ENCODE measurements at regions of chr2 and their contacts with region 1.

Region 1: GRCh38 chr2:7203055-7203467 is 285.8 kb downstream of the RNF144A start:
- DNase-seq: peak; percentile 15
- ATAC-seq: peak; percentile 53; the same call in 1 of the 2 replicates
- H3K4me3 ChIP-seq: no peak overlapping the region
- H3K27ac ChIP-seq: no peak overlapping the region
- H3K4me1 ChIP-seq: no peaks in the 10 kb centered on the region
- H3K27me3 ChIP-seq: no peaks in the 10 kb centered on the region
- CTCF ChIP-seq: peak; percentile 93

Region 2: DNA sequence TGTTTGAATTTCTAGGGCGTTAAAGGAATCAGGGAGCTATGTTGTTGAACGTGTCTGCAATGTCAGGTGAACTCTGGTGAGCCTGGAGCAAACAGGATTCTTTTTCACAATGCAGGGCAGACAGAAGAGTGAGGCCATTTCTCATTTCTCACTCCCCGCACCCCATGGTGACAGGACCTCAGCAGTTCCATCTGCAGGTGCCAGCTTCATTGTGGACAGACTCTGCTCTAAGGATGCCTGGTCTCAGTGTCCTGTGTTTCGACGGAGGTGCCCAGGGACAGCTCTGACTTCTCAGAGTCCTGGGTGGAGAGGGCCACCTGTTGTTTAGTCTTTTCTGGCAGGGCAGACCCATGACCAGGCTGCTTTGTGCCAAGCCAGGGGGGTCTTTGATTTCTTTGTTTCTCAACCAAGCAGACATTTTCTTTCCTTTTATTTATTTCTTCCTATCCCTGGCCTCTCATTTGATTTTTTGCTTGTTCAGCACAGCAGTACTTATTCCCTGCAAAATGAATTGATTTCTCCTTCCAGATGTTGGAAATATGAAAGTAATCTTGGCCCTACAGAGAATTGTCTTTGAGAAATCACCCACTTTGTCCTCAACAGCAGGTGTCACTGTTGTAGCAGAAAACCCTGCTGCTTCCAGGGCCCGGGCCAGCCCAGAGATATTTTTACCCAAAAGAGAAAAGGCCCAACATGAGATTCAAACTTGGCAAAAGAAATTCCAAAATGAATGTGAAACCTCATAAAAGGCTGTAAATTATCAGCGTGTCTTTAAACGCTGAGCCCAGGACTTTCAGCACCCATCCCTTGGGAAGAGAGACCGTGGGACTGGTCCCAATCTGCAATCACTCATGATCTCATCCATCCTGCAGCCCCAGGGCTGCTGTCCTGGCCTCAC is 84.2 kb before region 1 on chr2:
- CTCF ChIA-PET with region 1: interaction called, 15 read pairs
- POLR2A ChIA-PET with region 1: no interaction called
- in situ Hi-C with region 1: no loop called
- intact Hi-C with region 1: no loop called
- DNase-seq: no peak
- ATAC-seq: peak; percentile 69; the same call in 1 of the 2 replicates
- H3K4me3 ChIP-seq: no peak overlapping the region
- H3K27ac ChIP-seq: no peak overlapping the region
- H3K4me1 ChIP-seq: no peaks in the 10 kb centered on the region
- H3K27me3 ChIP-seq: no peaks in the 10 kb centered on the region
- CTCF ChIP-seq: peak; percentile 67

Measured in Panc1 (cell line).